Endothelial cell of umbilical vein (primary cell): ENCODE measurements at regions of chr3 and their contacts with region 1.

Region 1: DNA sequence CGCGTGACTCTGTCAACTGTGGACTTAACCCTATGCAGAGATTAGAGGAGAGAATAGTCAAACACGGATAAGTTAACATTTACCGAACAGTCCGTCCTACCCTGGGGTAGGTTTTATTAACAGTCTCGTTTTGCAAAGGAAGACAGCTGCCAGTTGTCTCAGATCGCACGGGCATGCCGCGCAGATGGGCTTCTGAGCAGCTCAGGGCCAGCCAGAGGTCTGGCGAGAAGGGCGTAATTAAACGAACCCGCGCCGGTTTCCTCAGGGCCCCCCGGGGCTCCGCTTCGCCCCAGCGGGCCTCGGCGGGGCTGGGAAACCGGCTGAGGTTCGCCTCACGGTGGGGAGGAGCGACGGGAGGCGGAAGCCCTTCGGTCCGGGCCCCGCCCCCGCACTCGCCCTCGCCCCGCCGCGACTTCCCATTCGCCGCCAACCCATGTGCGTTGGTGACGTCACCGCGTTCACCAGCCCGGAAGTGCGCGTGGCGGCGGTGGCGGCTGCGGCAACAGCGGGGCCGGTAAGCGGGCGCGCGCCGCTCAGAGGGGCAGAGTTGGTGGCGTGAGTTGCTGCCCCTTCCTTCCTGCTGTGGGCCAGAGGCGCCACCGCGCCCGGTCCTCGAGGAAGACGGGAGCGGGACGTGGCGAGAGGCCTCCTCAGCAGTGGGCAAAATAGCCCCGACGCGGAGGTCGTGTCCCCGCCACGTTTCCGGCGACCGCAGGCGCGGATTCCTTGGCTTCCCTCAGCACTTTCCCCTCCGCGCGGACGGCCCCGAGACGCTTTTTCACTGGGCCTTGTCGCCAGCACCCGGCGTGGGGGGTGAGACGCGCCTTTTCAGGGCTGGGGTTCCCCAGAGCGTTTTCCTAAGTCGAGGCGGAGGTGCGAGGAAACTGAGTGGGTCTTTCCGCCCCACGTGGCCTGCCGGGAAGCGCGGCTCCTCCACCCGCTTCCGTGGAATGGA is at the start of gene TRNT1:
- DNase-seq: peak; percentile 92
- H3K4me3 ChIP-seq: peak within 1 kb of the TSS; percentile 17 to 87 (median 69)
- H3K27ac ChIP-seq: peak within 1 kb of the TSS; percentile 82
- H3K4me1 ChIP-seq: peaks cover 10% of the 10 kb centered on the region
- H3K27me3 ChIP-seq: no peaks in the 10 kb centered on the region
- CTCF ChIP-seq: no peak
- POLR2A ChIP-seq: peak; percentile 85
- total RNA-seq, gene TRNT1: 21.3 and 21.9 TPM in 2 replicates

Region 2: DNA sequence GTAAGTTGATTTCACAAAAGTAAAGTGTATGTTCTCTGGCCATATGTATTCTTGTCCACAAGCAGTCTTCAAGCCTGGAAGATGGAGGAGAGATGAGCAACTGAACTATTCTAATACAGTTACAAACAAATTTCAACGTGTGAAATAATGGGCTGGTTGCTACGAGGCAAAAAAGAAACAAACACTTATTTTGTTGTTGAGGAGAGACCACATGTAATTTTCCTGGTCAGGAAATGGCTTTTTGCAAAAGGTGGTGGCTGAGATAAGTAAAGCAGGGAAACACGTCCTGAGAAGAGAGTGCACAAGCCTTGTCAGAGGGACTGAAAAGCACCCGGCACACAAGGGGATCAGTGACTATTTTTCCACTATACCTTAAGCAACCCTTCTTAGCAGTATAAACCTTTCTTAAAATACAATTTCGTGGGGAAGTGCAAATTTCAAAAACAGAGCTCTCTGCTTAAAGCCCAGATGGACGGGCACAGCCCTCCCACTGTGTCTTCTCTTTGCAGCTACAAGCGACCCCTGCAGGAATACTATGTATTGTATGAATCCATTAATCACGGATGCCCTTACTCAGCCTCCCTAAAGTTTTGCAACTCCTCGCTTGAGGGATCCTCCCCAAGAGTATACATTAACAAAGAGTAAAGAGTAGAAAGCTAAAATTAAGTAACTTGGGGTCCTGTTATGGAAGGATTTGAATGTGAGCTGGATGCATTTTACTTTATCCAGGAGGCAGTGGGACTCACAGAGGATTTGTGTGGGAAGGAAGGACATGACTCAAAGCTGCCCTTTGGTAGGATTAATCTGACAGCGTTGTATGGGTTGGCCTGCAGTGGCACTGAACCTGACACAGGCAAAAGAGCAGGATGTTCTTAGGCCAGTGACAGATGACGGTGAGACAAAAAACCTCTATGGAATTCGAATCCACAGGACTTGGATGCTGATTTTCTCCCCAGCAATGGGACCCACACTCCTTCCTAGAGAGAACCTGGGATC is 270.3 kb before region 1 on chr3:
- CTCF ChIA-PET with region 1: no interaction called
- POLR2A ChIA-PET with region 1: no interaction called
- dilution Hi-C with region 1: no loop called
- intact Hi-C with region 1: no loop called
- DNase-seq: no peak
- H3K4me3 ChIP-seq: no peak overlapping the region
- H3K27ac ChIP-seq: no peak overlapping the region
- H3K4me1 ChIP-seq: no peaks in the 10 kb centered on the region
- H3K27me3 ChIP-seq: no peaks in the 10 kb centered on the region
- CTCF ChIP-seq: no peak
- POLR2A ChIP-seq: no peak

Region 3: GRCh38 chr3:3154879-3155610 is 28.3 kb after region 1 on chr3:
- CTCF ChIA-PET with region 1: no interaction called
- POLR2A ChIA-PET with region 1: no interaction called
- dilution Hi-C with region 1: no loop called
- intact Hi-C with region 1: loop called (anchors 2 kb)
- DNase-seq: no peak
- H3K4me3 ChIP-seq: no peak overlapping the region
- H3K27ac ChIP-seq: no peak overlapping the region
- H3K4me1 ChIP-seq: peaks cover 9% of the 10 kb centered on the region
- H3K27me3 ChIP-seq: no peaks in the 10 kb centered on the region
- CTCF ChIP-seq: no peak
- POLR2A ChIP-seq: no peak

Region 4: DNA sequence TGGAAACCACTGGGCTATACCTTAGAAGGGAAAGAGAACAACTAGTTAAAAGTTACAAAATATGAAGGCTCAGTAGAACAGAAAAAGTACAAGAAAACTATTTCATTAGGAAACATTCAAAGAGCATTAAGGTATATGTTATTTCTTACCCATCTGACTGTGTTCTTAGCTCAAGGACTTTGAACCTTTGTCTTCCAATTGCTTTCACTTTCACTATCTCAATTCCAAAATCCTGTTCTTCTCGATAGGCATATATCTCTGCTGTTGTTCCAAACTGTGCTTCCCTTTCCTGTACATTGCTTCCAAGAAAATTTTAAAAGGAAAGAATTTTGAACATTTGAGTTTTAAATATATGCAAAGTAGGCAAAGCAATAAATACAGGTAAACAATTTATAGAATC is 45.9 kb after region 1 on chr3:
- CTCF ChIA-PET with region 1: interaction called, 5 read pairs
- POLR2A ChIA-PET with region 1: no interaction called
- dilution Hi-C with region 1: no loop called
- intact Hi-C with region 1: loop called (anchors 1 kb)
- DNase-seq: peak; percentile 49
- H3K4me3 ChIP-seq: peak overlapping the region in 1 of 3 experiments; percentile 40
- H3K27ac ChIP-seq: peak overlapping the region; percentile 94
- H3K4me1 ChIP-seq: peaks cover 20% of the 10 kb centered on the region
- H3K27me3 ChIP-seq: no peaks in the 10 kb centered on the region
- CTCF ChIP-seq: no peak
- POLR2A ChIP-seq: no peak

Region 5: GRCh38 chr3:3179407-3180094 is 52.8 kb after region 1 on chr3 and contains the start of gene CRBN:
- CTCF ChIA-PET with region 1: no interaction called
- POLR2A ChIA-PET with region 1: no interaction called
- dilution Hi-C with region 1: no loop called
- intact Hi-C with region 1: loop called (anchors 1 kb)
- DNase-seq: peak; percentile 91
- H3K4me3 ChIP-seq: peak within 1 kb of the TSS; percentile 78 to 99 (median 90)
- H3K27ac ChIP-seq: peak within 1 kb of the TSS; percentile 68
- H3K4me1 ChIP-seq: peaks cover 15% of the 10 kb centered on the region
- H3K27me3 ChIP-seq: no peaks in the 10 kb centered on the region
- CTCF ChIP-seq: peak; percentile 96 to 98
- POLR2A ChIP-seq: peak; percentile 75
- total RNA-seq, gene CRBN: 34.8 and 36.1 TPM in 2 replicates